Thyroid gland (tissue), 4 donors: ENCODE measurements at regions of chr3 and their contacts with region 1.

Region 1: DNA sequence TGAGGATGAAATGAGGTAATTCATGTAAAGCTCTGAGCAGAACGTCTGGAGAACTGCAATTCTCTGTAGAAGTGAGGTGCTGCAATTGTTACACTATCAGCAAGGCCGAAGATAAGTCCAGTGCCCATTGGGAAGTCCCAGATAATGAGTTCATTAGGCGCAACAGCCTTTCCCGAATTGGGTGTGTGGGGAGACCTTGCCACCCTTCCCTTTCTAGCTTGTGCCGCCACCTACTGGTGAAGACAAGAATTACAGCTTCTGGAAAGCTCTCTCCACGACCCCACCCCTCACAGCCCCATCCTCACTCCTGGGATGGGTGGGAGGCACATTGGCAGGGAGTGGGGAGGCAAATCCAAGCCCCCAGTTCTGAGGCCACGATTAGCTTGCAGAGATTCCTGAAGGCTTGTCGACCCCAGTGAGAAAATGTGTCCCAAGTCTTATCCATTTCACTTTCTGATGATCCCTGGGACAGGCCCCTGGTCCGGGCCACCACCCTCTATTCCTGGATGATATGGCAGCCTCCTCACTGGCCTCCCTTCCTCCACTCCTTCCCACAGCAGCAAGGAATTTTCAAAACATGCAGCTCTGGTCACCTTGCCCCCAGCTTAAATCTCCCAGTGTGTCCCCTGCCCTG is 36.4 kb downstream of the FAM3D start:
- DNase-seq: peak; percentile 58 to 63
- H3K4me3 ChIP-seq: no peak overlapping the region
- H3K27ac ChIP-seq: no peak overlapping the region
- H3K4me1 ChIP-seq: peaks cover 36 to 38% of the 10 kb centered on the region in 2 donors
- H3K27me3 ChIP-seq: no peaks in the 10 kb centered on the region
- CTCF ChIP-seq: peak; percentile 89 to 98 (median 93)
- POLR2A ChIP-seq: no peak

Region 2: GRCh38 chr3:58565621-58566397 is 64.4 kb before region 1 on chr3:
- intact Hi-C with region 1: loop called (anchors 2 kb)
- DNase-seq: no peak
- H3K4me3 ChIP-seq: no peak overlapping the region
- H3K27ac ChIP-seq: no peak overlapping the region
- H3K4me1 ChIP-seq: peaks cover 10 to 28% of the 10 kb centered on the region in 2 donors
- H3K27me3 ChIP-seq: no peaks in the 10 kb centered on the region
- CTCF ChIP-seq: no peak
- POLR2A ChIP-seq: no peak